CD8-positive, alpha-beta T cell (primary cell): ENCODE measurements at regions of chr9 and their contacts with region 1.

Region 1: DNA sequence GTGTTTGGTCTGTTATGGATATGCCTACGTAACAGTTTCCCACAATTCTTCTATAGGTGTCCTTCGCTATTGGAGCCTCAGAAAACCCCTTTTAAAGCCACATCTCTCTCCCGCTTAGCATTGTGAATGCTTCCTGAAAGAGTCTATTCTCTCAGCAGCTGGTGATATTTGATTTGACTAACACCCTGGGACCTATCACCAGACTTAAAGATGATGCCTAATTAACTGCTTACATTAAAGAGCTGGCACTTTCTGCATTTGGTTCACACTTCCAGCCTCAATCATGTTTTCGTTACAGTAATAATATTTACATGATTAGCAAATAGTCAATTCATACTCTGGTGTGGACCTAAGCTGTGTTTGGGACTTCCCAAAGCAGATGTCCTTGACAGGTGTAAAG is 90.1 kb upstream of the VLDLR start:
- DNase-seq: no peak
- ATAC-seq: no peak
- H3K4me3 ChIP-seq: no peak overlapping the region
- H3K4me3 Mint-ChIP-seq: no peak overlapping the region
- H3K27ac ChIP-seq: no peak overlapping the region
- H3K27ac Mint-ChIP-seq: no peak overlapping the region
- H3K4me1 ChIP-seq: no peaks in the 10 kb centered on the region
- H3K4me1 Mint-ChIP-seq: no peaks in the 10 kb centered on the region
- H3K27me3 ChIP-seq: no peaks in the 10 kb centered on the region
- H3K27me3 Mint-ChIP-seq: no peaks in the 10 kb centered on the region
- CTCF ChIP-seq: no peak

Region 2: GRCh38 chr9:2599896-2600295 is 68.4 kb after region 1 on chr9:
- CTCF ChIA-PET with region 1: no interaction called
- POLR2A ChIA-PET with region 1: no interaction called
- intact Hi-C with region 1: loop called in 1 of 2 experiments (anchors 2 kb)
- DNase-seq: no peak
- ATAC-seq: no peak
- H3K4me3 ChIP-seq: no peak overlapping the region
- H3K4me3 Mint-ChIP-seq: no peak overlapping the region
- H3K27ac ChIP-seq: no peak overlapping the region
- H3K27ac Mint-ChIP-seq: no peak overlapping the region
- H3K4me1 ChIP-seq: no peaks in the 10 kb centered on the region
- H3K4me1 Mint-ChIP-seq: no peaks in the 10 kb centered on the region
- H3K27me3 ChIP-seq: peaks cover 0 to 3% of the 10 kb centered on the region in 2 experiments
- H3K27me3 Mint-ChIP-seq: peaks cover 12% of the 10 kb centered on the region
- CTCF ChIP-seq: no peak